ENCODE measurements at regions of chr9 and their contacts with region 1.

Region 1: GRCh38 chr9:131530920-131531832 is at the start of gene UCK1:
- DNase-seq: peak; percentile 88
- H3K4me3 ChIP-seq: peak within 1 kb of the TSS; percentile 97
- H3K27ac ChIP-seq: no peak within 1 kb of the TSS
- H3K4me1 ChIP-seq: peaks cover 7% of the 10 kb centered on the region
- CTCF ChIP-seq: no peak
- total RNA-seq, gene UCK1: 29.0 and 32.9 TPM in 2 replicates

Region 2: DNA sequence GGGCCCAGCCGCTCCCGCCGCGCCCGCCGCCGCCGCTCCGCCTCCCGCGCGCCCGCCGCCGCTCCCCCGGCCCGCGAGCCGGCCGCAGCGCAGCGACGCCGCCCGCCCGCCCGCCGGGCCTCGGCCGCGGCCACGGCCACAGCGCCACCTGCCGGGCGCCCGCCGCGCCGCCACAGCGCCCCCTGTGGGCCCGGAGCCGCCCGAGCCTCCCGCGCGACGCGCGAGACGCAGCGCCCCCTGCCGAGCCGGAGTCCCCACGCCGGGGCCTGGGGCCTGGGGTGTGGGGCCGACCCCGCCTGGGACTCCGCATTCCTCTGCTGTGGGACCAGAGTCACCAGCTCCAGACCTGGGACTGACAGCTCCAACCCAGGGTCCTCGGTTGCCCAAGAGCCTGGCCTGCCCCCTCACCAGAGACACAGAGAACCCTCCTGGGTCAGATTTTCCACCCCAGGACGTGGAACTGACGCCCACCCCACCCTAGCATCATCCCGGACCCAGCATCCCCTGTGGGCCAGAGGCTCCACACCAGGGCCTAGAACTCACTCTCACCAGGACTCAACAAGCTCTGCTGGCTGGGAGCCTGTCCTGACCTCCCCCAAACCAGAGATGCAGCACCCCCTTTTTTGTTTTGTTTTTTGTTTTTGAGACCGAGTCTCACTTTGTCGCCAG is 208.9 kb after region 1 on chr9 and contains the start of gene RAPGEF1:
- CTCF ChIA-PET with region 1: no interaction called
- POLR2A ChIA-PET with region 1: no interaction called
- intact Hi-C with region 1: no loop called
- DNase-seq: peak; percentile 84
- H3K4me3 ChIP-seq: peak within 1 kb of the TSS; percentile 81
- H3K27ac ChIP-seq: peak within 1 kb of the TSS; percentile 100
- H3K4me1 ChIP-seq: peaks cover 70% of the 10 kb centered on the region
- CTCF ChIP-seq: peak; percentile 82
- total RNA-seq, gene RAPGEF1: 114 and 118 TPM in 2 replicates

Region 3: DNA sequence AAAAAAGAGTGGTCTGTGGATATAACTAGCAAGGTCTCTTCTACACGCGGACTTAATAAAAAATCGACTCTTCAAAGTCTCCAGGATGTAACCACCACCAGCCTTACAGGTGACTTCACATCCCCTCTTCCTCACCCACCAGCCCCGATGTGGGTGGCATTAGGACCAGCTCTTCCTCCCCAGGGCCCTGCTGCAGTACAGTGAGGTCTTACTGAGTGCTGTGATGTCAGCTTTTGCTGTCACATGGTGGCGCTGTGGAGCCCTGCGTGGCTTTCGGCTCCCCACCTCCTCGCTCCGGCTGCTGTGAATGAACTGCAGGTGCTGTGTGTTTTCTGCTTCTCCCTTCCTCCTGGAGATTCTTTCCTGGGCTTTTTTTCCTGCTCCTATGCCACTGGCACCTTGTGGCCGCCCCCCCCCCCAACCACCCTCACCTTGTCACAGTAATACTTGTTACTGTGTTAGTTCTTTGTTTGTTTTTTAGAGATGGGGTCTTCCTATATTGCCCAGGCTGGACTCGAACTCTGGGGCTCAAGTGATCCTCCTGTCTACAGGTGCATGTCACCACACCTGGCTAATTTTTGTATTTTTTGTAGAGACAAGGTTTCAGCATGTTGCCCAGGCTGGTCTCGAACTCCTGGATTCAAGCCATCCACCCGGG is 224.5 kb after region 1 on chr9:
- CTCF ChIA-PET with region 1: no interaction called
- POLR2A ChIA-PET with region 1: no interaction called
- intact Hi-C with region 1: loop called (anchors 2 kb)
- DNase-seq: peak; percentile 94
- H3K4me3 ChIP-seq: no peak overlapping the region
- H3K27ac ChIP-seq: peak overlapping the region; percentile 18
- H3K4me1 ChIP-seq: peaks cover 80% of the 10 kb centered on the region
- CTCF ChIP-seq: peak; percentile 93

Measured in OCI-LY7 (cell line).